ENCODE measurements at regions of chr19 and their contacts with region 1.

Region 1: GRCh38 chr19:39052243-39052746 is 19.9 kb upstream of the FBXO27 start:
- DNase-seq: peak; percentile 44 to 86 (median 71)
- ATAC-seq: no peak
- H3K4me3 ChIP-seq: no peak overlapping the region
- H3K4me3 Mint-ChIP-seq: no peak overlapping the region
- H3K27ac ChIP-seq: no peak overlapping the region
- H3K27ac Mint-ChIP-seq: no peak overlapping the region
- H3K4me1 ChIP-seq: no peaks in the 10 kb centered on the region
- H3K4me1 Mint-ChIP-seq: no peaks in the 10 kb centered on the region
- H3K27me3 ChIP-seq: no peaks in the 10 kb centered on the region
- H3K27me3 Mint-ChIP-seq: peaks cover 4% of the 10 kb centered on the region
- CTCF ChIP-seq: peak; percentile 94

Region 2: DNA sequence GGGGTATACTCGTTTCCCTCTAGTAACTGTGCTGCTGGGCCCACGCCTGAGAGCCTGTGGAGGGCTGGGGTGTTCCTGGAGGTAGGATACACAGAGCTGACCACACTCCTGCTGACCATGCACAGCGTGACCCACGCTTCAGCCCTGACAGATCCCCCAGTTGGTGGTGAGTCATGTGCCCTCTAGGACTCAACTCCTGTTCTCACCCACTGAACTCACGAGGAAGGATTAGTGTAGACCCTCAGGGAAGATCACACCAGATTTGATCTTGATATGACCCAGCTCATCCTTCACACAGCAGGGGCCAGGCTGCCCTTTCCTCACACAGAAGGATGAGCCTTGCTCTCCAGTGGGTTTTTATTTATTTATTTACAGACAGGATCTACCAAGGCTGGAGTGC is 18.6 kb after region 1 on chr19:
- CTCF ChIA-PET with region 1: interaction called, 11 read pairs
- POLR2A ChIA-PET with region 1: interaction called, 5 read pairs
- intact Hi-C with region 1: loop called in 1 of 2 experiments (anchors 2 kb)
- DNase-seq: no peak
- ATAC-seq: no peak
- H3K4me3 ChIP-seq: no peak overlapping the region
- H3K4me3 Mint-ChIP-seq: no peak overlapping the region
- H3K27ac ChIP-seq: no peak overlapping the region
- H3K27ac Mint-ChIP-seq: peak overlapping the region; percentile 60
- H3K4me1 ChIP-seq: peaks cover 20% of the 10 kb centered on the region
- H3K4me1 Mint-ChIP-seq: peaks cover 23% of the 10 kb centered on the region
- H3K27me3 ChIP-seq: no peaks in the 10 kb centered on the region
- H3K27me3 Mint-ChIP-seq: peaks cover 3% of the 10 kb centered on the region
- CTCF ChIP-seq: no peak

Region 3: GRCh38 chr19:39083983-39084731 is 31.9 kb after region 1 on chr19 and contains the start of gene ACP7:
- CTCF ChIA-PET with region 1: interaction called, 5 read pairs
- POLR2A ChIA-PET with region 1: no interaction called
- intact Hi-C with region 1: loop called in 1 of 2 experiments (anchors 5 kb)
- DNase-seq: peak in 7 of 9 experiments; percentile 19 to 65 (median 39)
- ATAC-seq: peak; percentile 63
- H3K4me3 ChIP-seq: peak within 1 kb of the TSS; percentile 42 to 46
- H3K4me3 Mint-ChIP-seq: peak within 1 kb of the TSS; percentile 79
- H3K27ac ChIP-seq: no peak within 1 kb of the TSS
- H3K27ac Mint-ChIP-seq: no peak within 1 kb of the TSS
- H3K4me1 ChIP-seq: peaks cover 10% of the 10 kb centered on the region
- H3K4me1 Mint-ChIP-seq: peaks cover 15% of the 10 kb centered on the region
- H3K27me3 ChIP-seq: peaks cover 6 to 13% of the 10 kb centered on the region in 2 experiments
- H3K27me3 Mint-ChIP-seq: peaks cover 36% of the 10 kb centered on the region
- CTCF ChIP-seq: no peak
- total RNA-seq, gene ACP7: not detected

Region 4: GRCh38 chr19:39187559-39187957 is 135.3 kb after region 1 on chr19:
- CTCF ChIA-PET with region 1: interaction called, 5 read pairs
- POLR2A ChIA-PET with region 1: no interaction called
- intact Hi-C with region 1: loop called in 1 of 2 experiments (anchors 1 kb)
- DNase-seq: no peak
- ATAC-seq: no peak
- H3K4me3 ChIP-seq: no peak overlapping the region
- H3K4me3 Mint-ChIP-seq: no peak overlapping the region
- H3K27ac ChIP-seq: no peak overlapping the region
- H3K27ac Mint-ChIP-seq: no peak overlapping the region
- H3K4me1 ChIP-seq: no peaks in the 10 kb centered on the region
- H3K4me1 Mint-ChIP-seq: no peaks in the 10 kb centered on the region
- H3K27me3 ChIP-seq: peaks cover 0 to 6% of the 10 kb centered on the region in 2 experiments
- H3K27me3 Mint-ChIP-seq: peaks cover 20% of the 10 kb centered on the region
- CTCF ChIP-seq: no peak

Region 5: GRCh38 chr19:39341719-39342604 is 289.7 kb after region 1 on chr19 and contains the start of gene SAMD4B:
- CTCF ChIA-PET with region 1: no interaction called
- POLR2A ChIA-PET with region 1: no interaction called
- intact Hi-C with region 1: no loop called
- DNase-seq: peak; percentile 98 to 100 (median 99)
- ATAC-seq: peak; percentile 90
- H3K4me3 ChIP-seq: peak within 1 kb of the TSS; percentile 93 to 97
- H3K4me3 Mint-ChIP-seq: peak within 1 kb of the TSS; percentile 100
- H3K27ac ChIP-seq: peak within 1 kb of the TSS; percentile 67 to 88
- H3K27ac Mint-ChIP-seq: peak within 1 kb of the TSS; percentile 98
- H3K4me1 ChIP-seq: peaks cover 29% of the 10 kb centered on the region
- H3K4me1 Mint-ChIP-seq: peaks cover 69% of the 10 kb centered on the region
- H3K27me3 ChIP-seq: no peaks in the 10 kb centered on the region
- H3K27me3 Mint-ChIP-seq: no peaks in the 10 kb centered on the region
- CTCF ChIP-seq: peak; percentile 73
- total RNA-seq, gene SAMD4B: 68.3 to 78.1 TPM